Aorta (tissue), 5 donors: ENCODE measurements at regions of chr15 and their contacts with region 1.

Region 1: GRCh38 chr15:34810455-34811146 is 15.3 kb upstream of the ACTC1 start:
- DNase-seq: peak; percentile 70 to 84
- ATAC-seq: peak; percentile 80
- H3K4me3 ChIP-seq: no peak overlapping the region
- H3K27ac ChIP-seq: peak overlapping the region; percentile 92 to 97
- H3K4me1 ChIP-seq: peaks cover 0 to 5% of the 10 kb centered on the region in 2 donors
- H3K27me3 ChIP-seq: no peaks in the 10 kb centered on the region

Region 2: GRCh38 chr15:34721802-34722795 is 88.5 kb before region 1 on chr15:
- intact Hi-C with region 1: loop called in 1 of 2 experiments (anchors 5 kb)
- DNase-seq: peak; percentile 84 to 92
- ATAC-seq: peak; percentile 93
- H3K4me3 ChIP-seq: no peak overlapping the region
- H3K27ac ChIP-seq: peak overlapping the region; percentile 10 to 63
- H3K4me1 ChIP-seq: peaks cover 2 to 15% of the 10 kb centered on the region in 2 donors
- H3K27me3 ChIP-seq: no peaks in the 10 kb centered on the region

Region 3: GRCh38 chr15:34773917-34774316 is 36.7 kb before region 1 on chr15:
- intact Hi-C with region 1: no loop called
- DNase-seq: no peak
- ATAC-seq: no peak
- H3K4me3 ChIP-seq: no peak overlapping the region
- H3K27ac ChIP-seq: no peak overlapping the region
- H3K4me1 ChIP-seq: peaks cover 2 to 3% of the 10 kb centered on the region in 2 donors
- H3K27me3 ChIP-seq: no peaks in the 10 kb centered on the region

Region 4: DNA sequence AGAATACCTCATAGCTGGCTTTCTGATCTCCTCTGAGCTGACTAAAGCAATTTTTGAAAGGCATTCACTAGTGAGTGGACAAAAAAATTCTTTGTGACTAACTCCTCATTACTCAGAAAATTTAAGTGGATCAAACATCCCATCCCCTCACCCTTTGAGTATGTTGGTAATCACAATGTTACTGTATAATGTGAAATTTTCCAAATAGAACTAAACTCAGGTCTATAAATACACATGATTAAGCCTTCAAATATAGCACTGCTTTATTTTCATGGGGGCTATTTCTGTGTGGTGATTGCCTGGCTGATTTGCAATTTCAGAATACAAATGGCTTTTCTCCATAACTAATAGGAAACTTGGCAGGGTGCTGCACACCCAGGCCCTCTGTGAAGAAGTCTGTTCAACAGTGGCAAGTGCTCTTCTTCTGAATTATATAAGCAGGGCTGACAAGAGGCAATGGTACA is 30.7 kb after region 1 on chr15:
- intact Hi-C with region 1: loop called in 1 of 2 experiments (anchors 1 kb)
- DNase-seq: no peak
- ATAC-seq: peak; percentile 55
- H3K4me3 ChIP-seq: no peak overlapping the region
- H3K27ac ChIP-seq: no peak overlapping the region
- H3K4me1 ChIP-seq: peaks cover 1 to 4% of the 10 kb centered on the region in 2 donors
- H3K27me3 ChIP-seq: no peaks in the 10 kb centered on the region

Region 5: DNA sequence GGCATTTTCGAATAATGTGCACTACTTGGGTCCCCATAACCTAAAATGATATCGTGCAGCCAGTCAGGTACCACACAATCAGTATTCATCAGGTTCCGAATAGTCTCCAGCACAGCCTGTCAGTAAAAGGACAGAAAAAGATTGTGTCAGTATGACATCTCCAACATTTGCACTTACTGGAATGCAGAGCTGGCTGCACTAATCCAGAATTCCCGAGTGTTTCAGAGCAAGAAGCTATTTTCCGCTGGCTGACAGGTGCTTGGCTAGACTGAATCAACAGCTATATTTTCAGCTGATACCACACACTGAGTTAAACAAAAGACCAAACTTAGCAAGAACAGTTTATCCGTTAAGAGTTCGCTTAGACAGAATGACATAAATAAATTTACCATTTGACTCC is 90.1 kb after region 1 on chr15:
- intact Hi-C with region 1: no loop called
- DNase-seq: no peak
- ATAC-seq: no peak
- H3K4me3 ChIP-seq: no peak overlapping the region
- H3K27ac ChIP-seq: no peak overlapping the region
- H3K4me1 ChIP-seq: peaks cover 0 to 2% of the 10 kb centered on the region in 2 donors
- H3K27me3 ChIP-seq: no peaks in the 10 kb centered on the region

Region 6: GRCh38 chr15:35399901-35400300 is 589.3 kb after region 1 on chr15:
- intact Hi-C with region 1: no loop called
- DNase-seq: no peak
- ATAC-seq: no peak
- H3K4me3 ChIP-seq: no peak overlapping the region
- H3K27ac ChIP-seq: no peak overlapping the region
- H3K4me1 ChIP-seq: no peaks in the 10 kb centered on the region
- H3K27me3 ChIP-seq: no peaks in the 10 kb centered on the region